CD8-positive, alpha-beta T cell (primary cell): ENCODE measurements at regions of chr3 and their contacts with region 1.

Region 1: DNA sequence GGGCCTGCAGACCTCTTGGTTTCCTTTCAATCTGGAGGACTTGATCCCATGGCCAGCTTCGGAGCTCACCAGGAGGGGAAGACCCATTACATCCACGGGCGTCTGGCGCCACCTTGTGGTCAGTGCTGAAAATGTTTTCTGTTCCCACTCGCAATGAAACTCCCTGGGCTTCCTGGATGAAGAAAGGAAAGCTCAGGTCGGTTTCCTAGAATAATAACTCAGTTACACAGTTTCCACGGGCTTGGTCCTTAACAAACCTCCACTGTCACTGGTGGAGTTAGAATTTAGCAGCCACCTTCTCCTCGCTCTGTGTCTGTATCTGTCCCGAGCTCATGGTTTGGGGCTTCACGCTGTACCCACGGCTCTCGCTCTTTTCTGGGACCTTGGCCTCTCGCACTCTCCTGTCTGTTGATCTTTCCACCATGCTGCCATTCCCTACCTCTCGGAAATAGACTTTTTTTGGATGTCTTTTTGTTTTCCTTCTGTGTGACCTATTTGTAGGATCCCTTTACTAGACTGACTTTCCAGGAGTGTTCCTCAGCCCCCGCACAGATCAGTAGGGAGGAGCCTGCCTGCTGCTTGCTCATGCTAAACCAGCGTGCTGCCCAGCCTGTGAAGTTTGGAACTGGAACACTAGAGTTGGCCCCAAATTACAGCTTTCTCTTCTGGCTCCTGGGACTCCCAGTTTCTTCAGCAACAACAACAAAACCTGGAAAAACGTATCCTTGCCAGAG is 56.3 kb downstream of the IL20RB start:
- DNase-seq: peak; percentile 73 to 93 (median 85)
- ATAC-seq: peak; percentile 84
- H3K4me3 ChIP-seq: peak overlapping the region; percentile 34 to 44
- H3K4me3 Mint-ChIP-seq: peak overlapping the region; percentile 68
- H3K27ac ChIP-seq: no peak overlapping the region
- H3K27ac Mint-ChIP-seq: no peak overlapping the region
- H3K4me1 ChIP-seq: no peaks in the 10 kb centered on the region
- H3K4me1 Mint-ChIP-seq: peaks cover 8% of the 10 kb centered on the region
- H3K27me3 ChIP-seq: no peaks in the 10 kb centered on the region
- H3K27me3 Mint-ChIP-seq: no peaks in the 10 kb centered on the region
- CTCF ChIP-seq: peak; percentile 95

Region 2: DNA sequence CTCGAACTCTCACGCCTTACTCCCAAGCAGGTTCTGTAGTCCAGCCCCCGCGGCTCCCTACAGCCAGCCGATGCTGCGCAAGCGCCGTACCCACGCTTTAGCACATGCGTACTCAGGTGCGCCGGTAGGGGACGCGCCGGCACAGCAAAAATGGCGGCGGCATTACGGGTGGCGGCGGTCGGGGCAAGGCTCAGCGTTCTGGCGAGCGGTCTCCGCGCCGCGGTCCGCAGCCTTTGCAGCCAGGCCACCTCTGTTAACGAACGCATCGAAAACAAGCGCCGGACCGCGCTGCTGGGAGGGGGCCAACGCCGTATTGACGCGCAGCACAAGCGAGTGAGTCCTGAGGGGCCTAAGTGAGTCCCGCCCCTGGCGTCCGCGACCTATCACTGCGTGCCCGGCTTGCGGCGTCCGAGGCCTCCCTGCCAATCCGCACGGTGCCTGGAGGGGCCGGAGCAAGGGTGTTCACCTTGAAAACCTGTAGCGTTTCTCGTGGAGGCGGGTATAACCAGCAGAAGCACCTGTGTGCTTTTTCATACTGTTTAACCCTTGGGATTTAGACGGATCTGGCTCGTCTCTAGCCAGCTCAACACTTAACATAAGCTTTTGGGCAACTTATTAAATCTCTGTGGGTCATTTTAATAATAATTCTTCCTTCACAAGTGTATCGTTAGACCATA is 763.8 kb before region 1 on chr3 and contains the start of gene PCCB:
- CTCF ChIA-PET with region 1: interaction called, 6 read pairs
- POLR2A ChIA-PET with region 1: no interaction called
- intact Hi-C with region 1: loop called in 1 of 2 experiments (anchors 10 kb)
- DNase-seq: peak; percentile 84 to 95 (median 90)
- ATAC-seq: peak; percentile 96
- H3K4me3 ChIP-seq: peak within 1 kb of the TSS; percentile 88 to 93
- H3K4me3 Mint-ChIP-seq: peak within 1 kb of the TSS; percentile 94
- H3K27ac ChIP-seq: peak within 1 kb of the TSS; percentile 74 to 89
- H3K27ac Mint-ChIP-seq: peak within 1 kb of the TSS; percentile 85
- H3K4me1 ChIP-seq: peaks cover 16% of the 10 kb centered on the region
- H3K4me1 Mint-ChIP-seq: peaks cover 23% of the 10 kb centered on the region
- H3K27me3 ChIP-seq: no peaks in the 10 kb centered on the region
- H3K27me3 Mint-ChIP-seq: no peaks in the 10 kb centered on the region
- CTCF ChIP-seq: peak; percentile 91
- total RNA-seq, gene PCCB: 12.3 to 15.8 TPM

Region 3: GRCh38 chr3:136305878-136306277 is 708.2 kb before region 1 on chr3:
- CTCF ChIA-PET with region 1: interaction called, 9 read pairs
- POLR2A ChIA-PET with region 1: no interaction called
- intact Hi-C with region 1: loop called (anchors 1 to 2 kb)
- DNase-seq: peak in 1 of 9 experiments; percentile 8
- ATAC-seq: no peak
- H3K4me3 ChIP-seq: no peak overlapping the region
- H3K4me3 Mint-ChIP-seq: no peak overlapping the region
- H3K27ac ChIP-seq: no peak overlapping the region
- H3K27ac Mint-ChIP-seq: no peak overlapping the region
- H3K4me1 ChIP-seq: no peaks in the 10 kb centered on the region
- H3K4me1 Mint-ChIP-seq: no peaks in the 10 kb centered on the region
- H3K27me3 ChIP-seq: no peaks in the 10 kb centered on the region
- H3K27me3 Mint-ChIP-seq: no peaks in the 10 kb centered on the region
- CTCF ChIP-seq: peak; percentile 43

Region 4: DNA sequence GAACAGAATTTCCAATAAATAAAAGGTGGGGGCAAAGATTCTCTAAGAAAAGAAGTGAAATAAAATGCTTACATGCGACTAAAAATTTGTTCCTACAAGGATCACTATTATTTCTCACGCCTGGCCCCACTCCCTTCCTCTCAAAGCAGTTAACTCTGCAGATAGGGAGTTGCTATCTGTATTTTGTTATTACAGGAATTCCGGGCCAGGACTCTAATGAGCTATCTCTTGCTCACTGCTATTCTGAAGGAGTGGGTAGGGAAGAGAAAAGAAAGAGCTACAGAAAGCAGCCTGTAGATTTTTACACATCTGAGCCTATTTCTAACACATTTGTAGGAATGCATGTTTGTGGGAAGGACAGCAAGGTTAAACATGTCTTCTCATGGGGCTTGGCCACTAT is 623.5 kb before region 1 on chr3:
- CTCF ChIA-PET with region 1: interaction called, 45 read pairs
- POLR2A ChIA-PET with region 1: interaction called, 3 read pairs
- intact Hi-C with region 1: loop called (anchors 1 kb)
- DNase-seq: no peak
- ATAC-seq: no peak
- H3K4me3 ChIP-seq: no peak overlapping the region
- H3K4me3 Mint-ChIP-seq: no peak overlapping the region
- H3K27ac ChIP-seq: no peak overlapping the region
- H3K27ac Mint-ChIP-seq: no peak overlapping the region
- H3K4me1 ChIP-seq: no peaks in the 10 kb centered on the region
- H3K4me1 Mint-ChIP-seq: peaks cover 2% of the 10 kb centered on the region
- H3K27me3 ChIP-seq: no peaks in the 10 kb centered on the region
- H3K27me3 Mint-ChIP-seq: no peaks in the 10 kb centered on the region
- CTCF ChIP-seq: no peak

Region 5: GRCh38 chr3:136545664-136546268 is 468.4 kb before region 1 on chr3:
- CTCF ChIA-PET with region 1: interaction called, 4 read pairs
- POLR2A ChIA-PET with region 1: no interaction called
- intact Hi-C with region 1: loop called (anchors 1 to 5 kb)
- DNase-seq: peak in 2 of 9 experiments; percentile 7 to 20
- ATAC-seq: no peak
- H3K4me3 ChIP-seq: no peak overlapping the region
- H3K4me3 Mint-ChIP-seq: no peak overlapping the region
- H3K27ac ChIP-seq: no peak overlapping the region
- H3K27ac Mint-ChIP-seq: no peak overlapping the region
- H3K4me1 ChIP-seq: no peaks in the 10 kb centered on the region
- H3K4me1 Mint-ChIP-seq: peaks cover 24% of the 10 kb centered on the region
- H3K27me3 ChIP-seq: no peaks in the 10 kb centered on the region
- H3K27me3 Mint-ChIP-seq: no peaks in the 10 kb centered on the region
- CTCF ChIP-seq: no peak

Region 6: DNA sequence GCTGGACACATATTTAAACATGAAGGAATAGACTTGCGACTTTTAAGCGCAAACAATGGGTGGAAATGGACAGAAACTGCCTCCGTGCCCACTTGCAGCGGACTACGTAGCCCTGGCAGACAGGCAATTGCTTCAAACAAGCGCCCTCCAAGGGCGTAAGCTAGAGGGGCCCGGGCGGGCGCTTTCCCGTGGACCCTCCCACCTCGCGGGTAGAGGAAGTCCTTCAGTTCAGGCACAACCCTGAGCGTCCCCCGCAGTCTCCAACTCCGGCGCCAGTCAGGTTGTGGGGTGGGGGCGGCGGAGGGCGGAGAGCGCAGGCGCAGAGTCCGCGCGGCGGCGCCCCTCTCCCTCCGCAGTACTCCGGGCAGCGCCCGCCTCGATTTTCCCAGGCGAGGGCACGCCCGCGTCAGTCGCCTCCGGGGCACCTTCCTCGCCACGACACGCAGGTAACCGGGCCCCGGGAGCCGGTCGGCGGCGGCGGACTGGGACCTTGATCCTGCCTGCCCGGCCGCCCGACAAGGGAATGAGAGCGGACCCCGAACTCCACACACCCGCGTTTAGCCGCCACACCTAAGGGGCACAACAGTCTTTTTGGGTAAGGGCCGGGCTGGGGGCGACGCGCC is 195.2 kb before region 1 on chr3 and contains the start of gene SLC35G2:
- CTCF ChIA-PET with region 1: no interaction called
- POLR2A ChIA-PET with region 1: no interaction called
- intact Hi-C with region 1: loop called in 1 of 2 experiments (anchors 1 kb)
- DNase-seq: peak in 7 of 9 experiments; percentile 6 to 60 (median 37)
- ATAC-seq: peak; percentile 74
- H3K4me3 ChIP-seq: peak within 1 kb of the TSS; percentile 55 to 63
- H3K4me3 Mint-ChIP-seq: peak within 1 kb of the TSS; percentile 86
- H3K27ac ChIP-seq: peak within 1 kb of the TSS in 1 of 2 experiments; percentile 30
- H3K27ac Mint-ChIP-seq: peak within 1 kb of the TSS; percentile 57
- H3K4me1 ChIP-seq: peaks cover 11% of the 10 kb centered on the region
- H3K4me1 Mint-ChIP-seq: peaks cover 22% of the 10 kb centered on the region
- H3K27me3 ChIP-seq: peaks cover 5 to 13% of the 10 kb centered on the region in 2 experiments
- H3K27me3 Mint-ChIP-seq: peaks cover 40% of the 10 kb centered on the region
- CTCF ChIP-seq: no peak
- total RNA-seq, gene SLC35G2: 0.24 TPM in 1 of 2 experiments, not detected in the other

Region 7: DNA sequence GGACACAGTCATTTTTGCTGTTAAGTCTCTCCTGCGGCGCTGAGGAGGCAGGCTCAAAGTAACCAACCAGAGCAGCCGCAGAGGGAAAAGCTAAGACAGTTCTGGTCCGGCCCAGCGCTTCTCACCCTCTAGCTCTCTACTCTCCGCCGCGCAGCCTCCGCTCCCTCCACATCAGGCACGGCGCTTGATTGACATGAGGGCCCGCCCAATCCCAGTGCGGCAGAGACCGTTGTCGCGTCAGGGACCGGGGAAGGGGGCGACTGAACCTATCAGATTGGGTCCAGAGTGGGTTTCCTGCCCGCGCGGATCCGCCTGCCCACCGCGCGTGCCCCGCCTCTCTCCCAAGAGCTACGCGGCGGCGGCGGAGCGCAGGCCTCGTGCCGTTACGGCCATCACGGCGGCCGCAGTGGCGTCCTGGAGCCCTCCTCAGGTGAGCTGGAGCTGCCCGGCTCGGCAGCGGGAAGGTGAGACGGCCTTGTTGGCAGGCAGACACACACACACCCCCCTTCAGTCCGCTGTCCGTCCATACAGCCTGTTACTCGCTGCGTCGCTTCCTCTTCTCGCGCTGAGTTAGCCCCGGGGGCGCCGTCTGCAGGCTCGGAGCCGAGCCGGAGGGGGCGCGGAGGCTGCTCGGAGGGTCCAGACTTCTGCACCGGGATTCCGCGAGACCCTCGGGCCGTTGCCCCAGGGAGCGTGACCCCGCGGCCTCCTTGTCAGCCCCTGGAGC is 152.1 kb before region 1 on chr3 and contains the start of gene NCK1:
- CTCF ChIA-PET with region 1: interaction called, 11 read pairs
- POLR2A ChIA-PET with region 1: no interaction called
- intact Hi-C with region 1: loop called in 1 of 2 experiments (anchors 2 kb)
- DNase-seq: peak; percentile 97 to 100 (median 99)
- ATAC-seq: peak; percentile 93
- H3K4me3 ChIP-seq: peak within 1 kb of the TSS; percentile 76 to 92
- H3K4me3 Mint-ChIP-seq: peak within 1 kb of the TSS; percentile 90
- H3K27ac ChIP-seq: peak within 1 kb of the TSS; percentile 86 to 96
- H3K27ac Mint-ChIP-seq: peak within 1 kb of the TSS; percentile 98
- H3K4me1 ChIP-seq: peaks cover 23% of the 10 kb centered on the region
- H3K4me1 Mint-ChIP-seq: peaks cover 63% of the 10 kb centered on the region
- H3K27me3 ChIP-seq: no peaks in the 10 kb centered on the region
- H3K27me3 Mint-ChIP-seq: no peaks in the 10 kb centered on the region
- CTCF ChIP-seq: no peak
- total RNA-seq, gene NCK1: 54.8 to 68.7 TPM

Region 8: DNA sequence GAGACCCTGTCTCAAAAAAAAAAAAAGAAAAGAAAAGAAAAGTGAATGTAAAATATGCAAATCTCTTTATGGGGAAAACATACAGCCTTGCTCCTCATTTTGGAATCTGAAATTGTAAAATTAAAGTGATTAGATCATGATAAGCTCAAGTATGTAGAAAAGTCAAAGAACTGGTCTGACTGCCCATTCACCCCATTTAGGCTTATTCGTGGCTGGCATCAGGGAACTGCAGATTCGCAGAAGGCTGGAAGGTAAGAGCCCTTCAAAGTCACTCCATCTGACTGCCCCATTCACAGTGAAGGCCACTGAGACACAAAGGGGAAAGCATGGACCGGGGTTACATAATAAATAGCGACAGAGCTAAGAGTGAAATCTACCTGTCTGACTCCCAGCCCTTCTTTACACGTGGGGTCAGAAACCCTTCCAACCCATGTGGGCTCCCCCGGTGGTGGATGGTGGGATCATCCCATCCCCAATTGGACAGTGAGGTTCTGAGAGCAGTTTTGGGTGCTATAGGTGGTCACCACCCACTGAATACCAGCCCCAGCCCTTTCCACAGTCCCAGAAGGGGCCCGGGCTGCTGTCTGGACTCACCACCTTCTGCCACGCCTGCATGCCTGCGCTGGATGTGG is 1083.2 kb after region 1 on chr3:
- CTCF ChIA-PET with region 1: no interaction called
- POLR2A ChIA-PET with region 1: no interaction called
- intact Hi-C with region 1: no loop called
- DNase-seq: no peak
- ATAC-seq: no peak
- H3K4me3 ChIP-seq: no peak overlapping the region
- H3K4me3 Mint-ChIP-seq: no peak overlapping the region
- H3K27ac ChIP-seq: no peak overlapping the region
- H3K27ac Mint-ChIP-seq: no peak overlapping the region
- H3K4me1 ChIP-seq: no peaks in the 10 kb centered on the region
- H3K4me1 Mint-ChIP-seq: no peaks in the 10 kb centered on the region
- H3K27me3 ChIP-seq: no peaks in the 10 kb centered on the region
- H3K27me3 Mint-ChIP-seq: peaks cover 6% of the 10 kb centered on the region
- CTCF ChIP-seq: no peak